ENCODE measurements at regions of chr1 and their contacts with region 1.

Region 1: DNA sequence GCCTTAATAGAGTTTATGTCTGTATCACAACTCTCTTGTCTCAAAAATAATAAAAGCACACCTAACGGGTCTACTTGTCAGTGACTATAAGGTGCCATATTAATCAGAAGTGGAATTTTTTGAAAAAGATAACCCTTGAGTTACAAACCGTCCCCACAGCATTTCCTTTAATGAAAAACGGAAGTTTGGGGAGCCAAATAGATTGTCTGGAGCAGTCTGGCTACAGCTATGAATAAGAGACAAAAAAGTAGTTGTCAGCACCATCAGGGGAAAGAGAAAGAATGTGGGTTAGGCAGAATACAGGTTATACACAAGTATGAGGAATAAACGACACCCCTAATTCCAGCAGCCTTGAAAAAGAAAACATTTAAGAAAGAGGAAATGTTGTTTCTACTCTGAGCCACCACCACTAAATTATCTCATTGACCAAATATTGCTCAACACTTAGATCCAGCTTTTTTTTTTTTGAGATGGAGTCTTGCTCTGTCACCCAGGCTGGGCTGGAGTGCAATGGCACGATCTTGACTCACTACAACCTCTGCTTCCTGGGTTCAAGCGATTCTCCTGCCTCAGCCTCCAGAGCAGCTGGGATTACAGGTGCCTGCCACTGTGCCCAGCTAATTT is 29.4 kb upstream of the USP24 start:
- DNase-seq: no peak
- H3K27ac ChIP-seq: no peak overlapping the region
- CTCF ChIP-seq: no peak

Region 2: GRCh38 chr1:55257958-55258357 is 13.4 kb after region 1 on chr1:
- CTCF ChIA-PET with region 1: no interaction called
- POLR2A ChIA-PET with region 1: interaction called, 13 read pairs
- DNase-seq: no peak
- H3K27ac ChIP-seq: no peak overlapping the region
- CTCF ChIP-seq: no peak